Panc1 (cell line): ENCODE measurements at regions of chr1 and their contacts with region 1.

Region 1: GRCh38 chr1:157580179-157580827 is 17.6 kb downstream of the FCRL4 start:
- DNase-seq: peak; percentile 55
- ATAC-seq: peak; percentile 80
- H3K4me3 ChIP-seq: no peak overlapping the region
- H3K27ac ChIP-seq: no peak overlapping the region
- H3K4me1 ChIP-seq: no peaks in the 10 kb centered on the region
- H3K27me3 ChIP-seq: 0 out of 2 replicates have a peak, but pooled peaks cover 3% of the 10 kb centered on the region
- CTCF ChIP-seq: peak; percentile 79

Region 2: DNA sequence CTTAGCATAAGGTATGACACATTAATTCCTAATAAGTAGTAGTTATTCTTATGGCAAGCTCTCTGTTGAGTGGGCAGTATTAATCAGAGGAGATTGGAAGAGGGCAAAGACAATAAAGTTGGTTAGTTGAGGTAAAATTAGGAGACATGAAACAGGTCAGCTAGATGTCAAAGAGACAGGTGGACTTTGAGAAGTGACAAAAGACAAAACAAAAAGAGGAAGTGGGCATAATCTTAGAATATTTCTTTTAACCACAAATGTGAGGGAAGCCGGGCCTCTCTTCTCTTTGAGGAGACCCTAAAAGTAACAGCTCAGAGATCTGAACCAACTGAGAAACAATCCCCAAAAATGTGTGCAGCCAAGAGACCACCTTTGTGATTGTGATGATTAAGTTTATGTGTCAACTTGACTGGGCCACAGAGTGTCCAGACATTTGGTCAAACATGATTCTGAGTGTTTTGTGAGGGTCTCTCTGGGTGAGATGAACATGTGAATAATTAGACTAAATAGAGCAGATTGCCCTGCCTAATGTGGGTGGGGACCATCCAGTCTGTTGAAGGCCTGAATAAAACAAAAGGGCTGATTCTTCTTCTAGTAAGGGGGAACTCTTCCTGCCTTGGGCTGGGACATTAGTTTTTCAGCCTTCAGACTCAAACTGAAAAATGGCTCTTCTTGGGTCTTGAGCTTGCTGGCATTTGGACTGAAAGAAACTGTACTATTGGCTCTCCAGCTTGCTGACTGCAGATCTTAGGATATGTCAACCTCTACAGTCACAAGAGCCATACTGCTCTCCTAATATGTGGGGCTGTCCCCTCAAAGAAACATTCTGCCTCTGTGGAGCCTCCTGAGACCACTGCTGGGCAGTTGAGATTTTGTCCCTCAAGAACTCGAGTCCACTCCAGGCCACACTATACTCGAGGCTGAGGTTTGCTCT is 68.0 kb before region 1 on chr1:
- CTCF ChIA-PET with region 1: no interaction called
- POLR2A ChIA-PET with region 1: no interaction called
- in situ Hi-C with region 1: no loop called
- intact Hi-C with region 1: loop called (anchors 10 kb)
- DNase-seq: no peak
- ATAC-seq: no peak
- H3K4me3 ChIP-seq: no peak overlapping the region
- H3K27ac ChIP-seq: no peak overlapping the region
- H3K4me1 ChIP-seq: no peaks in the 10 kb centered on the region
- H3K27me3 ChIP-seq: peaks cover 1% of the 10 kb centered on the region; the same call in 1 of the 2 replicates
- CTCF ChIP-seq: no peak

Region 3: DNA sequence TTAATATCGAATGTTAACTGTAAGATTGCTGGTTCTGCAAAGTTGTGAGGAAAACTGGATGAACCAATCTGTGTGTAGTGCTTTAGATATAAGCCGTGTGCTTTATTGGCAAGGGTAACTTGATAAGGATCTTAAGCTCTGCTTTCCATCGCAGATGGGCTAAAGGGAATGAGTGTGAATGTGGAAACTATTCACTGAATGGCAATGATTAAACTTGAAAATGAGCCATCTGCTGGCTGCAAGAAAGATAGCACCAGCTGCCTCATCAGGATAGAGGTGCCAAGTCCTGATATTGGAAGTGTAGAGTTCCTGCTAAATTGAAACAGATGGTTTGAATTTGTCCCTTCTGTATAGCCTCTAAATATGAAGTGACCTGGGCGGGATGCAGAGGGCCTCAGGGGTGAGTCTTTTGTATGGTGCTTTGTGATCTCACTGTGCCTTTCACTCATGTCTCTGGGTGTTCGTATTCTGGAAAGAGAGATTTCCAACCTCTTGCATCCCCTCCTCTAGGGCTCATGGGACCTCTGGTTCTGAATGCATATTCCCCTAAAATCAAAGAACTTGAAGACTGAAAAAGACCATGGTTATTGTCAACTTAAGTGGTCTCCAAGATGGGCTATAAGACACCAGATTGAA is 111.1 kb after region 1 on chr1:
- CTCF ChIA-PET with region 1: interaction called, 5 read pairs
- POLR2A ChIA-PET with region 1: no interaction called
- in situ Hi-C with region 1: no loop called
- intact Hi-C with region 1: loop called (anchors 1 kb)
- DNase-seq: peak; percentile 15
- ATAC-seq: peak; percentile 84
- H3K4me3 ChIP-seq: no peak overlapping the region
- H3K27ac ChIP-seq: no peak overlapping the region
- H3K4me1 ChIP-seq: no peaks in the 10 kb centered on the region
- H3K27me3 ChIP-seq: no peaks in the 10 kb centered on the region
- CTCF ChIP-seq: peak; percentile 79

Region 4: GRCh38 chr1:157955857-157956256 is 375.6 kb after region 1 on chr1:
- CTCF ChIA-PET with region 1: no interaction called
- POLR2A ChIA-PET with region 1: no interaction called
- in situ Hi-C with region 1: no loop called
- intact Hi-C with region 1: loop called (anchors 10 kb)
- DNase-seq: no peak
- ATAC-seq: no peak
- H3K4me3 ChIP-seq: no peak overlapping the region
- H3K27ac ChIP-seq: no peak overlapping the region
- H3K4me1 ChIP-seq: no peaks in the 10 kb centered on the region
- H3K27me3 ChIP-seq: peaks cover 24% of the 10 kb centered on the region
- CTCF ChIP-seq: no peak

Region 5: DNA sequence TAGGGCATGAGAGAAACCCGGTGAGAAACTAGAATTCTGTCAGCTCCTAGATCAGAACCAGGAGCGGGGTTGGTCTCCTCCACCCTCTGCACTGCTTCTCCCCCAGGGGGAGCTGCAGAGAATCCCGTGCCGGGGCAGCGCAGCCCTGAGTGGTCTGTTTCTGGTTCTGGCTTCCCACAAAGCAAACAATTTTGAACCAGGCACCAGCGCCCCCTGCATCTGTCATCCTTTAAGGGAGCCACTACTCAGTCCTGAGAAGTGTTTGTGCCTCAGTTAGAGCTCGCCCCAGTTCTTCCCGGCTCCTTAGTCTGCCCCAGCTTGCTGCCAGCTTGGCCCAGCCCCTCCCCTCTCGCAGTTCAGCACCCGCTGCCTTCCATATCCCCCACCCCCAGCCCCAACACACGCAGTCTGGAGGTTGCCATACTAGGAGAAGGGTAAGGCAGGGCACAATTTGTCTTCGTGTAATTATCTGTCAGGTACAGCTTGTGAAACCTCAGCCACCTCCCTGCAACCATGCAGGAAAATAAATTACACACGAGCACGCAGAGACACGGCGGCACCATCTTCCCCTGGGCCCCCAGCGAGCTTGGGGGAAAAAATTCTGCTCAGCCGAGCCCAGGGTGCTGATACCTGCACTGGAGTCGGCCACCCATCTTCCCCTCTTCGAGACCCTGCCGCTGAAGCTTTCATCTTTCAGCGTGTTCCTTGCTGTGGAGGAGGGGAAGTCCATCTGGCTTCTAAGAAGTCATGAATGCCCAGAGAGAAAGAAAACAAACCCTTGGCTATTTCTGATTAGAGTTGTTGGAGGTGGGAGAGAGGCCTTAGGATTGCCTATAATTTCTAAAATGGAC is 537.8 kb after region 1 on chr1:
- CTCF ChIA-PET with region 1: interaction called, 10 read pairs
- POLR2A ChIA-PET with region 1: no interaction called
- in situ Hi-C with region 1: no loop called
- intact Hi-C with region 1: loop called (anchors 10 kb)
- DNase-seq: no peak
- ATAC-seq: peak; percentile 93
- H3K4me3 ChIP-seq: peak overlapping the region; percentile 12 to 40
- H3K27ac ChIP-seq: no peak overlapping the region
- H3K4me1 ChIP-seq: peaks cover 6% of the 10 kb centered on the region; the same call in 1 of the 2 replicates
- H3K27me3 ChIP-seq: peaks cover 4% of the 10 kb centered on the region; the same call in 1 of the 2 replicates
- CTCF ChIP-seq: peak; percentile 85